ENCODE measurements at regions of chr10 and their contacts with region 1.

Region 1: DNA sequence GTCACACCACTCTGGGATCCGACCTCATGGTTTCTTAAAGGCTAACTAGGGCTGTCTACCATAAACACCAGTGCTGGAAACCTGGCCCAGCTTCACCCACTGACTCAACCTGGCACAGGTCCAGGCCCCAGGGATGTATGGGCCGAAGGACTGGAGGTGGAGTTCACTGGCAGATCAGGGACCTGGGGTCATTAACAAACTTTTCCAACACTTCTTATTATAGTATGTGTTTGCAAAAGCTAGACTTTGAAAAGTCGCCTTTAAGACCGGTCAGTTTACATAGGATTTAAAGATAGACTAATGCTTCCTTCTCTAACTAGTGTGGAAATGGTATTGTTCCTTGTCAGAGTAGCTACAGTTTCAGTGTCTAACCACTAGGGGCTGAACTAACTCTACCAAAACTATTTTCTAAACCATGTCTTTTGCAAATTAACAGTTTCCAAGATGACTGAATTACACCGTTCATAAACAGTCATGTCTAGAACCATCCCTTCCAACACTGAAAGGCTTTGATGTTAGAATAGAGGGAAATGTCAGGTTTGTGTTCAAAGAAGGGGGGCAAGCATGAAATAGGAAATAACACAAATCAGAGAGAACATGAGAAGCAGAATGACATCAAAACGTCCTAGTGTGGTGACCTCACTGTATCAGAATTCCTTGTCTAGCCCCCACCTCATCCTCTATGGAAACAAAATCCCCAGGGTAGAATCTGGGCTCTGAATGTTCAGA is 29.7 kb downstream of the STN1 start:
- DNase-seq: peak; percentile 54 to 64
- ATAC-seq: peak; percentile 52 to 78 (median 72)
- H3K4me3 ChIP-seq: no peak overlapping the region
- H3K27ac ChIP-seq: peak overlapping the region in 8 of 10 donors; percentile 14 to 67 (median 40)
- H3K4me1 ChIP-seq: peaks cover 8 to 59% (median 34%) of the 10 kb centered on the region in 9 donors
- H3K27me3 ChIP-seq: no peaks in the 10 kb centered on the region
- CTCF ChIP-seq: peak; percentile 75 to 93 (median 82)

Region 2: DNA sequence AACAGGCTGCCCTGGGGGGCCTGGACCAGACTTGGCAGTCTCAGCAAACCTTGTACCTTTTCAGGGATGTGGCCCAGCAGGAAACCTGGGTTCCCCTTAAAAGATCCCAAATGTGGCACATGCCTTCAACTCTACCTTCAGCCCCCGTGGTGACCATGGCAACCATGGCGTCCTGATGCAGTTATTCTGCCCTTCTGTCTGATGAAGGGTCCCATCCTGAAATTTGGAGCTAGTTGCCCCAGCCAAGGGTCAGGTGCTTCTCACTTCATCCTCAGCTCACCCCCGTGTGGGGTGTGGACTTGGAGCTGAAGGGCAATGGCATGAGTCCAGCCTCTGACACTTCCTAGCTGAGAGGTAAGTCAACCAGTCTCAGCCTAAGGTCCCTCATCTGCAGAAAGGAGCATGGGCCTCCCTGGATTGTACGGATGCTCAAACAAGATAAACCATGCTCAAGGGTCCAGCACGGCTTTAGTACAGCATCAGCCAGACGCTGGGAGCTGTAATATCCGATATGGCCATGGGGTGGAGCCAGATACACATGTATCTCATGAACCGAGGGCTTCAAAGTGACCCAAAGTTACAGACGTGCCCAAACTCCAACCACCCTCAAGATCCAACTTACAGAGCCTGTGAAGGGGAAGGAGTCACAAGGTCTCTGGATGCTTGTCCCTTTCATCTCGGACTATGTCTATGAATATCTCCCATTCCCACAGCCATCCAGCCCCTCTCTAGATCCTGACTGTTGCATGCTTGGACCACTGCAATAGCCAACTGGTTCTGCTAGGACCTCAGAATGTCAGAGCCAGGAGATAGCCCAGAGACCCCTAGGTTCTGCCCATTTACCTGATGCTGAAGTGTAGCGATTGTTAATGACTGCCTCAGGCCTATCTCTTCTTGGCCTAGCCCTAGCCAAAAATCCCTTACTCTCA is 175.4 kb before region 1 on chr10:
- intact Hi-C with region 1: loop called in 4 of 10 experiments (anchors 1 to 5 kb)
- DNase-seq: peak; percentile 74 to 84
- ATAC-seq: peak; percentile 62 to 87 (median 80)
- H3K4me3 ChIP-seq: no peak overlapping the region
- H3K27ac ChIP-seq: no peak overlapping the region
- H3K4me1 ChIP-seq: peaks cover 0 to 25% (median 9%) of the 10 kb centered on the region in 9 donors
- H3K27me3 ChIP-seq: no peaks in the 10 kb centered on the region
- CTCF ChIP-seq: peak; percentile 80 to 96 (median 90)

Region 3: DNA sequence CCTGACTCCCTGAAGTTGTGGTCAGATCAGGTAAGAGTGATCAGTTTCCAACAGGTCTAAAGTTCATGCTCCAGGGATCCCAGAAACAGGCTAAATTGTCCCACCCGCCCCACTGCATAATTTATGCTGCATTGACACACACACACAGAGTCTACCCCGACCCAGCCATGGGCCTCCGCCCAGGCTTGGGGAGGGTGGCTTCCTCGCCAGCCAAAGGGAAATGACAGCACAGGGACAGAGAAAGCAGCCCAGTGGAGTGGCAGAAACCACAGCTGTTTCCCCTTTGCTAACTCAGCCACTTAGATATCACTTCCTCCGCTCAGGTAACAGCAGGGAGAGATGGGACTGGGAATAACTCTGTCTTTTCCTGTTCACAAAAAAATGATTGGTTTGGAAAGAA is 42.3 kb before region 1 on chr10:
- intact Hi-C with region 1: no loop called
- DNase-seq: no peak
- ATAC-seq: peak in 6 of 8 donors; percentile 27 to 63 (median 50)
- H3K4me3 ChIP-seq: no peak overlapping the region
- H3K27ac ChIP-seq: peak overlapping the region in 6 of 10 donors; percentile 10 to 37 (median 20)
- H3K4me1 ChIP-seq: peaks cover 26 to 94% (median 70%) of the 10 kb centered on the region in 9 donors
- H3K27me3 ChIP-seq: no peaks in the 10 kb centered on the region
- CTCF ChIP-seq: no peak

Region 4: GRCh38 chr10:103958996-103959395 is 70.7 kb after region 1 on chr10:
- intact Hi-C with region 1: no loop called
- DNase-seq: no peak
- ATAC-seq: no peak
- H3K4me3 ChIP-seq: no peak overlapping the region
- H3K27ac ChIP-seq: no peak overlapping the region
- H3K4me1 ChIP-seq: peaks cover 0 to 5% (median 0%) of the 10 kb centered on the region in 9 donors
- H3K27me3 ChIP-seq: no peaks in the 10 kb centered on the region
- CTCF ChIP-seq: no peak

Region 5: GRCh38 chr10:103983367-103983911 is 95.2 kb after region 1 on chr10:
- intact Hi-C with region 1: loop called in 1 of 10 experiments (anchors 10 kb)
- DNase-seq: no peak
- ATAC-seq: peak in 4 of 8 donors; percentile 25 to 54 (median 32)
- H3K4me3 ChIP-seq: peak overlapping the region in 1 of 10 donors; percentile 6
- H3K27ac ChIP-seq: peak overlapping the region in 4 of 10 donors; percentile 2 to 77 (median 24)
- H3K4me1 ChIP-seq: peaks cover 0 to 85% (median 32%) of the 10 kb centered on the region in 9 donors
- H3K27me3 ChIP-seq: no peaks in the 10 kb centered on the region
- CTCF ChIP-seq: no peak

Region 6: DNA sequence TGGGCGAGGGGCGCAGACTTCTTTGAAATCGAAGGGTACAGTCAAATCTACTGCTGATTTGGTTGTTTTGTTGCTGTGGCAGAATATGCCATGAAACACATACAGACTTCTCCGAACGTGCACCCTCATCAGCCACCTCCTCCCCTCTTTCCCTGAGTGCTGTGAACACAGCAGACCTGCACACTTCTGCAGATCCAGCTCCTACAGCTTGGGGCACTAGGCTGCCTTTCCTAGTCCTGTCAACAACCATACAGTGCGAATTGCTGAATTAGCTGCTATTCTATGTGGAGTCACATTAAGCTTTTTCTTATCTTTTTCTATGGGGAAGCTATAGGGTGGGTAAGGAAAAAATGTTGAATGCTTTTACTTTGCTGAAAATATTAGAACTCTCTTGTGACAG is 139.9 kb after region 1 on chr10:
- intact Hi-C with region 1: loop called in 5 of 10 experiments (anchors 10 kb)
- DNase-seq: peak in 1 of 2 donors; percentile 41
- ATAC-seq: peak; percentile 83 to 92 (median 86)
- H3K4me3 ChIP-seq: no peak overlapping the region
- H3K27ac ChIP-seq: peak overlapping the region in 7 of 10 donors; percentile 49 to 89 (median 83)
- H3K4me1 ChIP-seq: peaks cover 3 to 49% (median 13%) of the 10 kb centered on the region in 9 donors
- H3K27me3 ChIP-seq: no peaks in the 10 kb centered on the region
- CTCF ChIP-seq: peak; percentile 7 to 65 (median 44)

Region 7: GRCh38 chr10:104121520-104122224 is 233.4 kb after region 1 on chr10 and contains the start of gene SFR1:
- intact Hi-C with region 1: loop called in 8 of 10 experiments (anchors 1 to 10 kb)
- DNase-seq: peak; percentile 98 to 99
- ATAC-seq: peak; percentile 95 to 99 (median 97)
- H3K4me3 ChIP-seq: peak within 1 kb of the TSS; percentile 61 to 88 (median 78)
- H3K27ac ChIP-seq: peak within 1 kb of the TSS; percentile 89 to 100 (median 98)
- H3K4me1 ChIP-seq: peaks cover 0 to 24% (median 12%) of the 10 kb centered on the region in 9 donors
- H3K27me3 ChIP-seq: no peaks in the 10 kb centered on the region
- CTCF ChIP-seq: peak; percentile 25 to 81 (median 66)
- total RNA-seq, gene SFR1: 4.4 to 10.4 (median 6.7) TPM

Region 8: DNA sequence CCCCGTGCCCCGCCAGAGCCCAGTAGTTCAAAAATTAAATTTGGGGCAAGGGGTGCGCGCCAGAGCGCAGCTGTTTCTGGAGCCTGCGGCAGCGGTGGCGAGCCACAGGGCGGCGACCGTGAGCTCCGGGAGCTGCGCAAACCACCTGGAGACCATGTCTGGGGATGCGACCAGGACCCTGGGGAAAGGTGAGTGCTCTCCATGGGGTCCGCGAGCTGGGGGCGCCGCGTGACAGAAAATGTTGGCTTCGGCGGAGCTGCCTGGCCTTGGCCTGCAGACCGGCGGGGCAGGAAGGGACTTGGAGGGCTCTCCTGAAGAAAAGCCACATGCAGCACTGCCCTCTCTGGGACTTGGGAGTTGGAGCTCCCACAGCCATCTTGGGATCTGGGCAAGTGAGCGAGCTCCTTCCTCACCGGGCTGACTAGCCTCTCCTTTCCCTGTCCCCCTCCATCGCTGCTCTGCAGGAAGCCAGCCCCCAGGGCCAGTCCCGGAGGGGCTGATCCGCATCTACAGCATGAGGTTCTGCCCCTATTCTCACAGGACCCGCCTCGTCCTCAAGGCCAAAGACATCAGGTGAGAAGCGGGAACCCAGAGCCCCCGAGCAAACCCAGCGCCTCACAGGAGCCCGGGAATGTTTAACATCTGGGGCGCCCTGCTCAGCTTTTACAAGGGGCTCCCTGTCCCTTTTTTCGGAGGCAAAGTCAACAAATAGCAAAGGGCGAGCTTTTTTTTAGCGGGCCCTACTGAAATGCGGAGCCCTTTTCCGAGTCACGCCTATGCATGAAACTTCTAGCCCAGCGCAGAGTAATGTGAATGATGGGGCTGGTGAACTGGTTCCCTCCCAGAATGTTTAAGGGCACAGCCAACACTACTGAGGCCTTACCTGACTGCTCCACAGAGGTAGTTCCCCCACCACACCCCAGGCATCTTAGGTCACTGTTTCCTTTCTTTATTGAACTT is 386.8 kb after region 1 on chr10:
- intact Hi-C with region 1: loop called in 1 of 10 experiments (anchors 5 kb)
- DNase-seq: peak in 1 of 2 donors; percentile 27
- ATAC-seq: peak; percentile 49 to 82 (median 66)
- H3K4me3 ChIP-seq: peak overlapping the region in 2 of 10 donors; percentile 12 to 14
- H3K27ac ChIP-seq: no peak overlapping the region
- H3K4me1 ChIP-seq: peaks cover 0 to 8% (median 4%) of the 10 kb centered on the region in 9 donors
- H3K27me3 ChIP-seq: peaks cover 0 to 25% (median 8%) of the 10 kb centered on the region in 7 donors
- CTCF ChIP-seq: peak; percentile 53 to 92 (median 75)